ENCODE measurements at regions of chr3 and their contacts with region 1.

Region 1: GRCh38 chr3:148955544-148956346 is 35.6 kb upstream of the GYG1 start:
- DNase-seq: peak; percentile 53 to 79 (median 62)
- H3K4me3 ChIP-seq: no peak overlapping the region
- H3K27ac ChIP-seq: peak overlapping the region; percentile 87 to 95
- H3K4me1 ChIP-seq: peaks cover 12% of the 10 kb centered on the region
- H3K27me3 ChIP-seq: no peaks in the 10 kb centered on the region
- CTCF ChIP-seq: peak; percentile 28 to 62 (median 34)
- EP300 ChIP-seq: no peak
- POLR2A ChIP-seq: no peak

Region 2: DNA sequence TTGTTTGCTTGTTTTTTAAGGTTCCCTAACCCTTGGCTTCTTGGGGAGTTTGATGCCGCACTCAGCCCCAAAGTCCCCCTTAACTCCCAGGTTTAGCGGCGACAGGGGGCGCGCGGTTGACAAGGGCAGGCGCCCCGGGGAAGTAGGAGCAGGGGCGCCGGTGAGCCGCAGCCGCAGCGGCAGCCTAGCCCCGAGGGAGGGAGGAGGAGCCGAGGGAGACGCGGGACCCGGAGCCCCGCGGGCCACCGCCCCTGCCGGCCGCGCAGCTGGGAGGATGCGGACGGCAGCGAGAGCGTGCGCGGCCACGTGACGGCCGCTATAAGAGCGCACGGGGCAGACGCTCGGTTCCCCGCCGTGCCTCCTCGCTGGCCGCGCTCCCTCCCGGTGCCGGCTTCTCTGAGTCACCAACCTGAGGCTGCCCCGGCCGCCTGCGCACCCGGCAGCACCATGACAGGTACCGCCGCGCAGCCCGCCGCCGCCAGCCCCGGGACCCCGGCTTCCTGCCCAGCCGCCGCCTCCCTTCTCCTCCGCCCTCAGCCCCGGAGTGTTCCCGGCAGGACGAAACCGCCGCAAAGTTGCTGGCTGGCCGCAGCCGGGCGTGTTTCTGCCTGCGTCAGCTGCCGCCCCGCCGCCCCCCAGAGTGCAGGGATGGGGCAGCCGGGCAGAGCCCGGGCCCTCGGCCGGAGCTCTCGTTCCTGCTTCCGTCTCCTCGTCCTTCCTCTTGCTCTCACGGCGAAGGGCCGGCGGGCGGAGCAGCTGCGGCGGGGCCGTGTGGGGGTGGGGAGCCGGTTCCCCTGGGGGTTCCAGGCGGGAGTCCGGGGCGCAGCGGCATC is 35.7 kb after region 1 on chr3 and contains the start of gene GYG1:
- intact Hi-C with region 1: loop called in 1 of 4 experiments (anchors 2 kb)
- DNase-seq: peak; percentile 81 to 89 (median 87)
- H3K4me3 ChIP-seq: peak within 1 kb of the TSS; percentile 90
- H3K27ac ChIP-seq: peak within 1 kb of the TSS; percentile 95 to 97
- H3K4me1 ChIP-seq: peaks cover 9% of the 10 kb centered on the region
- H3K27me3 ChIP-seq: no peaks in the 10 kb centered on the region
- CTCF ChIP-seq: peak in 2 of 3 donors; percentile 42 to 45
- EP300 ChIP-seq: no peak
- POLR2A ChIP-seq: peak; percentile 85
- total RNA-seq, gene GYG1: 23.8 to 73.8 (median 54.0) TPM

Region 3: DNA sequence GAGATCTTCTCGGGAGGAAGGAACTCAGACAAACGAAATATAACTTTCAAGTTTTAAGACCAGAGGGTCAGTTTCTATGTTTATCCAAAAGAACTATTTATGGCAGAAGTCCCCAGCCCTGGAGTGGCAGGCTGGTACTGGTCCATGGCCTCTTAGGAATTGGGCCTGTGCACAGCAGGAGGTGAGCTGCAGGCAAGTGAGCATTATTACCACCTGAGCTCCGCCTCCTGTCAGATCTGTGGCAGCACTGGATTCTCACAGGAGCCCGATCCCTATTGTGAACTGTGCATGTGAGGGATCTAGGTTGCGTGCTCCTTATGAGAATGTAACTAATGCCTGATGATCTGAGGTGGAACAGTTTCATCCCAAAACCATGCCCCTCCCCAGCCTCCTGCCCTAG is 159.4 kb after region 1 on chr3:
- intact Hi-C with region 1: loop called in 2 of 4 experiments (anchors 5 to 10 kb)
- DNase-seq: no peak
- H3K4me3 ChIP-seq: no peak overlapping the region
- H3K27ac ChIP-seq: no peak overlapping the region
- H3K4me1 ChIP-seq: no peaks in the 10 kb centered on the region
- H3K27me3 ChIP-seq: no peaks in the 10 kb centered on the region
- CTCF ChIP-seq: no peak
- EP300 ChIP-seq: no peak
- POLR2A ChIP-seq: no peak